ENCODE measurements at regions of chr16 and their contacts with region 1.

Region 1: GRCh38 chr16:28181515-28181914 is 30.2 kb downstream of the XPO6 start:
- DNase-seq: peak; percentile 84
- H3K4me3 ChIP-seq: no peak overlapping the region
- H3K27me3 ChIP-seq: no peaks in the 10 kb centered on the region
- CTCF ChIP-seq: no peak

Region 2: DNA sequence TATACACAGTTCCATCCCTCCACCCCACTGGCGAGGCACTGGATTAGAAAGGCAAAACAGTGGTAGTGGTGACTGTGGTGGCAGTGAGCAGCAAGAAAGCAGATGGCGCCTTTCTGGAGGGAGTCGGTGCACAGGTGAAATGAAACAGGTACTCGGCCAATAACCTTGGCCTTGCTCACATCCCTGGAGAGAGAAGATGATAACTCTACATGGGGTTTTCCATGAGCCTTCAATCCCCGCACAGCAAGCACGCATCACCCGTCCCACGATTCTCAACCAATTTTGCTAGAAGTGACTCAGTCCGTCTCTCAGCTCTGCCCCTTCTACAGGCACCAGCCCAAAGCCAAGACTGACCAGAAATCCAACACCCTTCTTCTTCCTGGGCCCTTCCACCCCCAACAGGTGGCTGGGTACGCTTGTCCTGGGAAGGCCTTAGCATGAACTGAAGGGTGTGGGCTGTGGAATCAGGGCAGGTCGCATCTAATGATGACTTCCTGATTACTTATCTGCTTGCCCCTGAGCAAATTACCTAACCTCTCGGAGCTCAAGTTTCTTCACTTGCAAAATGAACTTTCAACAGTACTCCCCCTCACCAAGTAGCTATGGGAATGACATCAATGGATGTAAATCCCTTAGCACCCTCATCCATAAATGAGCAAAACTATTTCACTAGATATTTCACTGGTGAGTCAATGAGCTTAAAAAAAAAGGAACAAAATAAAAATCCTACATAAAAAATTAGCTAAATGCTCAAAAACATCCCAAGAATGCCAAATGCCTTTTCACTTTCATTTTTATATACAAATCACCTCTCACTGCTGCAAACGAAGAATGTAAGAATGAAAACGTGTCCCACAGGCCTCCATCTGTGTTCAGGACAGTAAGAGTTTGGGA is 12.3 kb after region 1 on chr16:
- CTCF ChIA-PET with region 1: interaction called, 8 read pairs
- POLR2A ChIA-PET with region 1: interaction called, 12 read pairs
- DNase-seq: peak; percentile 95
- H3K4me3 ChIP-seq: no peak overlapping the region
- H3K27me3 ChIP-seq: no peaks in the 10 kb centered on the region
- CTCF ChIP-seq: no peak